SK-N-SH (cell line): ENCODE measurements at regions of chr2 and their contacts with region 1.

Region 1: GRCh38 chr2:98269274-98269673 is 77.0 kb upstream of the CNGA3 start:
- DNase-seq: peak; percentile 61
- H3K4me3 ChIP-seq: no peak overlapping the region; a peak in 1 of 4 replicates
- H3K27ac ChIP-seq: no peak overlapping the region
- H3K4me1 ChIP-seq: no peaks in the 10 kb centered on the region
- H3K27me3 ChIP-seq: no peaks in the 10 kb centered on the region; the same call in 1 of the 2 replicates
- CTCF ChIP-seq: peak; percentile 67
- EP300 ChIP-seq: no peak
- RAD21 ChIP-seq: peak; percentile 79

Region 2: DNA sequence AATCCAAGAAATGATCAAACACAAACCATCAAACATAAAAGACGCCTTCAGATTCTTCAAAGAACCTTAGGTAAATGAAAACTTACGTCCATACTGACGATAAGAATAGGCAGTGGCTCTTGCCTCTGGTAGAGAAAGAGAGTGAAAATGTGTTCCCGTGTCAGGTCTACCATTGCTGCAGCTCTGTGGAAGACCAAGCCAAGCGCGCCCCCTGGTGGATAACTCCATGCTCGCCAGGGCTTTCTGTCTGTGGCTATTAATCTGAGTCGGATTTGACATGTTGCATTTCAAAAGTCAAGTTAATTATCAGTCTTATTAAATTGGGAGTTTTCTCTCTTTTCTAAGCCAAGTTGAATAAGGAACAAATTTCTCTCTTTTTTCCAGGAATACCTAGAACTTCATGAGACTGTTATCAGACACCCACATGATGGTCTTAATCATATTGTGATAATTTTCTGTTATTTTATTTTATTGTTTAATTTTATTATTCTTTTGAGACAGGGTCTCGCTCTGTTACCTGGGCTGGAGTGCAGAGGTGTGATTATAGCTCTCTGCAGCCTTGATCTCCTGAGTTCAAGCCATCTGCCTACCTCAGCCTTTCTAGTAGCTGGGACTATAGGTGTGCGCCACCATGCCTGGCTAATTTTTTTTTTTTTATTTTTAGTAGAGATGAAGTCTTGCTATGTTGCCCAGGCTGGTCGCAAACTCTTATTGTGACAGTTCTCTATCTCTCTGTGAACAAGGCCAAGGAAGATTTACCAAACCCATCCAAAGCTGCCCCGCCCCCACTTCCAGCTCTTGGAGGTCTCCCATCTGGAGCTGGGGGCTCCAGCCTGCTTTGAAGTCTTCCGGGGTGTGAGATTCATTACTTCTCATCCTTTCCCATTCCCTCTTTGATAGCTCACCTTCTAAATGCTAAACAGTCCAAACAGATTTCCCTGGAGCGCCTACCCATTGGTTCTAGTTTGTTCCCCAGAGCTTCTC is 571.7 kb before region 1 on chr2:
- CTCF ChIA-PET with region 1: interaction called, 15 read pairs
- POLR2A ChIA-PET with region 1: no interaction called
- DNase-seq: peak; percentile 78
- H3K4me3 ChIP-seq: peak overlapping the region in 1 of 2 experiments; percentile 33; a peak in 1 of 4 replicates
- H3K27ac ChIP-seq: no peak overlapping the region
- H3K4me1 ChIP-seq: no peaks in the 10 kb centered on the region; a peak in 1 of 4 replicates
- H3K27me3 ChIP-seq: no peaks in the 10 kb centered on the region
- CTCF ChIP-seq: peak; percentile 96
- EP300 ChIP-seq: no peak
- RAD21 ChIP-seq: peak; percentile 99

Region 3: DNA sequence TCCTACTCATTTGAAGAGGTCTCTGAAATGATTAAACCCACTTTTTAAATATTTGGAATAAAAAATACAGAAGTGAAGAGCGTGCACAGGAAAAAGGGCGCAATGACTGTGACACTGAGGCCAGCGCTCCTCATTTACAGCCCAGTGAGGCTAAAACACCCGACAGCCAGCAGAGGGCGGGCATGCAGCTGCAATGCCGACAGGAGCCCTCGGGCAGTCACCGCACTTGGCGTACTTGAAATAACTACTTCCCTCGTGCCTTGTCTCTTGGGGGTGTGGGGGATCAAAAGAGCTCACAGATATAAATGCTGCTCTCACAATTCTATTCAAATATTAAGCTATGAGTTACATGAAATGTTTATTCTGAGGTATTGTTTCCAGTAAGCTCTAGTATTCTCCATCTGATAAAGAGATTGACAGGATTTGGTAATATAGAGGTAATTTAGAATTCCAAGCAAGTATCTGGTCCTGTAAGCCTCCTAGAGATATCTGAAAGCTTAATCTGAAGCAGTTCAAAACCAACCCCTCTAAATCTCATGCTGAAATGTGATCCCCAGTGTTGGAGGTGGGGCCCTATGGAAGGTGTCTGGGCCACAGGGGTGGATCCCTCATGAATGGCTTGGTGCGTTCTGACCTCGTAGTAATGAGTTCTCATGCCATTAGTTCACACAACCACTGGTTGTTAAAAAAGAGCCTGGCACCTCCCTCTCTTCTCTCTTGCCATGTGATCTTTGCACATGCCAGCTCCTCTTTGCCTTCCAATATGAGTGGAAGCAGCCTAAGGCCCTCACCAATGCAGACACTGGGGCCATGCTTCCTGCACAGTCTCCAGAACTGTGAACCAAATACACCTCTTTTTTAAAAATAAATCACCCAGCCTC is 462.3 kb before region 1 on chr2:
- CTCF ChIA-PET with region 1: interaction called, 43 read pairs
- POLR2A ChIA-PET with region 1: no interaction called
- DNase-seq: peak; percentile 74
- H3K4me3 ChIP-seq: no peak overlapping the region; a peak in 1 of 4 replicates
- H3K27ac ChIP-seq: no peak overlapping the region
- H3K4me1 ChIP-seq: no peaks in the 10 kb centered on the region
- H3K27me3 ChIP-seq: no peaks in the 10 kb centered on the region
- CTCF ChIP-seq: peak; percentile 92
- EP300 ChIP-seq: no peak
- RAD21 ChIP-seq: peak; percentile 95

Region 4: GRCh38 chr2:98253461-98254070 is 15.7 kb before region 1 on chr2:
- CTCF ChIA-PET with region 1: interaction called, 22 read pairs
- POLR2A ChIA-PET with region 1: no interaction called
- DNase-seq: no peak
- H3K4me3 ChIP-seq: no peak overlapping the region
- H3K27ac ChIP-seq: no peak overlapping the region
- H3K4me1 ChIP-seq: no peaks in the 10 kb centered on the region
- H3K27me3 ChIP-seq: no peaks in the 10 kb centered on the region
- CTCF ChIP-seq: no peak
- EP300 ChIP-seq: no peak
- RAD21 ChIP-seq: no peak

Region 5: DNA sequence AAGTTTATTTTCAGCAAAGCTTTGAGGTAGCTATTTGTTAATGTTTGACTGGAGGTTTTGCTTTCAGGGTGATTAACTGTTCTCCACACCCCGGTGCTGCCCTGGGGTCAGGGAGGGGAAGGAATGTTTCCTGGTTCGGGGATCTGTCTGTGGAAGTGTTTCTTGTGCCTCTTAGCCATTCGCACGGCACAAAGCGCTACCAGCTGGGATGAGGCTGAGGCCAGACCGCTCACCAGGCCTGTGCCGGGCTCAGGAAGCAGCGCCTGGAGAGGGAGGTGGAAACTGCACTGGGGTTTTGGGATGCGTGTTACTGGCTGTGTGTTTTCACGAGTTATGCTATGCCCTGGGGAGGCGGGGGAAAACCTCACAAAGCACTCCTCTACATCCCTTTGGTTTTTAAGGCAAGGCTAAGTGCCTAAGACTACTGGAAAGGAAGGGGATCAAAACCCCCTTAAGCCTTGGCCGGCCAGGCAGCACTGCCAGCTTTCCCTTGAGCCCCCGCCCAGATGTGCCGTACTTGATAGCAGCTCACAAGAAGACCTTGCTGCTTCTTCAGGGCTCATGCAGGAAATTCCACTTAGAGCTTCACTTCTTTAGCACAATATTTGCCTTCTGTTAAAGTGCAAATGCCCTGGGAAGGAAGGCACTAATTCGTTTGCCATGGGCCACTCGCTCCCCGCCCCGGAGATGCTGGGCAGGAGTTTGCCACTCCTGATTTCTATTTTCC is 11.3 kb after region 1 on chr2:
- CTCF ChIA-PET with region 1: interaction called, 26 read pairs
- POLR2A ChIA-PET with region 1: no interaction called
- DNase-seq: no peak
- H3K4me3 ChIP-seq: no peak overlapping the region
- H3K27ac ChIP-seq: no peak overlapping the region
- H3K4me1 ChIP-seq: peaks cover 0 to 9% of the 10 kb centered on the region in 2 experiments; a peak in 1 of 4 replicates
- H3K27me3 ChIP-seq: no peaks in the 10 kb centered on the region; the same call in 1 of the 2 replicates
- CTCF ChIP-seq: no peak
- EP300 ChIP-seq: no peak
- RAD21 ChIP-seq: no peak

Region 6: GRCh38 chr2:98295721-98296414 is 26.6 kb after region 1 on chr2:
- CTCF ChIA-PET with region 1: interaction called, 11 read pairs
- POLR2A ChIA-PET with region 1: no interaction called
- DNase-seq: no peak
- H3K4me3 ChIP-seq: no peak overlapping the region
- H3K27ac ChIP-seq: no peak overlapping the region
- H3K4me1 ChIP-seq: no peaks in the 10 kb centered on the region; a peak in 1 of 4 replicates
- H3K27me3 ChIP-seq: no peaks in the 10 kb centered on the region
- CTCF ChIP-seq: peak; percentile 46
- EP300 ChIP-seq: no peak
- RAD21 ChIP-seq: no peak; the same call in 1 of the 2 replicates